Dorsolateral prefrontal cortex (tissue), 120 donors: ENCODE measurements at regions of chr6 and their contacts with region 1.

Region 1: GRCh38 chr6:18221288-18221615 is 43.1 kb downstream of the DEK start:
- DNase-seq: no peak
- H3K4me3 ChIP-seq: no peak overlapping the region
- H3K27ac ChIP-seq: no peak overlapping the region
- H3K27me3 ChIP-seq: no peaks in the 10 kb centered on the region
- CTCF ChIP-seq: no peak

Region 2: DNA sequence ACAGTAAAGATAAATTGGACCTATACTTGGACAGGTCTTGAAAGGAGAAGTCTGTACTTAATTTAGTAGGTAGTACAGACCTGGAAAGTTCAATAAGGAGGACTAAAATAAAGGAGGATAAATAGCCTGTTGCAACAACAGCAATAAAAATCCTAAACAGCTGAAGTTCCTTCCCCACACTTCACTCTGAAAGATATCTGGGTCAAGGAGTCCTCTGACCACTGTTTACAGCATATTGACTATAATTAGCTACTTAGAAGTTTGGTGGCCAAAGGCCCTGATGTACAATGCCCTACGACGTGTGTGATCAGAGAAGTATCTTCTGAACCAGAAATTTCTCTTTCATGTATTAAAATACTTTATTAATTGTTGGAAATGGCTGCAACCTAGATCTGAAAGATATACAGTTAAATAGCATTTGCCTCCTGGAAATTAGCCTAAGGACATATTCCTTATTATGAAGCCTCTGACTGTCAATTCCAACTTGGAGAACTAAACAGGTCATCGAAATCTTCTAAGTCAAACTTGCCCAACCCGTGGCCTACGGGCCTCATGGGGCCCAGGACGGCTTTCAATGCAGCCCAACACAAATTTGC is 316.7 kb before region 1 on chr6:
- intact Hi-C with region 1: no loop called
- DNase-seq: no peak
- H3K4me3 ChIP-seq: no peak overlapping the region
- H3K27ac ChIP-seq: peak overlapping the region in 8 of 59 donors; percentile 4 to 48 (median 20)
- H3K27me3 ChIP-seq: no peaks in the 10 kb centered on the region
- CTCF ChIP-seq: no peak

Region 3: DNA sequence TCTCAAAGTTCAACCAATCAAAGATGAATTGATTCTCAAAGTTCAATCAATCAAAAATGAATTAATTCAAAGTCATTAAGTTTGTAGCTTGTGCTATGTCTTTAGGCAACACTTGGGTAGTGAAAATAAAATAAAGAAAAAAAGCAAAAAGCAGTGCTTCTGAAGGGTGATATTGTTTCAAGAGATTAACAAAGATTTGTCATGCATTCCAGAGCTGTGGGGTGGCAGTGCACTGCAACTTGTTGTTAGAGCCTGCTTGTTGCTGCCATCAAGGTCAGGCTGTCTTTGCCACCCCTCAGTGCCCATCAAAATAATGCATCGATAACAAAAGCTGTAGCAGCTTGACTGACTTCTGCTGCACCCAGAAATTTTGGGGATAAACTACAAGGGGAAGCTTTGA is 294.5 kb after region 1 on chr6:
- intact Hi-C with region 1: no loop called
- DNase-seq: no peak
- H3K4me3 ChIP-seq: no peak overlapping the region
- H3K27ac ChIP-seq: no peak overlapping the region
- H3K27me3 ChIP-seq: no peaks in the 10 kb centered on the region
- CTCF ChIP-seq: no peak

Region 4: GRCh38 chr6:20180935-20181334 is 1959.7 kb after region 1 on chr6:
- intact Hi-C with region 1: loop called in 1 of 2 experiments (anchors 10 kb)
- DNase-seq: no peak
- H3K4me3 ChIP-seq: no peak overlapping the region
- H3K27ac ChIP-seq: no peak overlapping the region
- H3K27me3 ChIP-seq: no peaks in the 10 kb centered on the region
- CTCF ChIP-seq: no peak